ENCODE measurements at regions of chr10 and their contacts with region 1.

Region 1: DNA sequence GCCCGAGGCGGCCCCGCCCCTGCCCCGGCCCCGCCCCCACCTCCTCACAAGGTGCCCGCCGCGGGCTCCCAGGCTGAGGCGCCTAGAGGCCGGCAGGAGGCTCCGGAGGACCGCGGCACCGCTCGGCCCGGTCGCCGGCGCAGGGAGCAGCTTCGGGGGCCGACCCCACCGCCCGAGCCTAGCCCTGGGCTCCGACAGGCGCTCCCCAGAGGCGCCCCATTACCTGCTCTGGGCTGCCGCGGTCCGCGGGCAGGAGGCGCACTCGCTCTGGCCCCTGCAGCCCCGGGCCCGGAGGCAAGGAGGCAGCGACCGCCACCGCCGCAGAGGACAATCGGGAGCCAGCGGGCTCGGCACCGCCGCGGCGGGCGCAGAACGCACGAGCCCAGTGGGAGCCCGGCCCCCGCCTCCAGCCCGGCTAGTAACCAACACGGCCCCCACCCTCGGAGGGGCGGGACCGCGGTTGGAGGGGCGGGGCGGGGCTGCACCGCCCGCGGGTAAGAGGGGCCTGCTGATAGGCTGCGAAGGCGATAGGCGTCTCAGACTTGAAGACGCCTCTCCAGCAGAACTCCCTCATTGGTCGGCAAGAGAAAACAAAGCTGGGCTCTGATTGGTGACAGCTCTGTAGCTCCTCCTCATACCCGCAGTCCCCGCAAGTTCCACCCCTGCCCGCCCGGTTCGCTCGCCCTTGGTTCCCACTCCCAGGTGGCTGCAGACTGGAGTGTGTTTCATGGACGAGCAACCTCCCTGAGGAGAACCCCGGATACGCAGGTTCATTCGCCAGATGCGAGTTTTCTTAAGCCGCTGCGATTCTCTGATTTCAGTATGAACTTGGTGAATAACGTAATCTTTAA is at the start of gene MPP7:
- DNase-seq: peak; percentile 94 to 98 (median 96)
- ATAC-seq: peak; percentile 89
- H3K4me3 ChIP-seq: peak within 1 kb of the TSS; percentile 67 to 87
- H3K4me3 Mint-ChIP-seq: peak within 1 kb of the TSS; percentile 97
- H3K27ac ChIP-seq: peak within 1 kb of the TSS; percentile 52 to 71
- H3K27ac Mint-ChIP-seq: peak within 1 kb of the TSS; percentile 95
- H3K4me1 ChIP-seq: peaks cover 44% of the 10 kb centered on the region
- H3K4me1 Mint-ChIP-seq: peaks cover 65% of the 10 kb centered on the region
- H3K27me3 ChIP-seq: no peaks in the 10 kb centered on the region
- H3K27me3 Mint-ChIP-seq: no peaks in the 10 kb centered on the region
- CTCF ChIP-seq: peak; percentile 61
- total RNA-seq, gene MPP7: 22.5 to 23.1 TPM

Region 2: GRCh38 chr10:27155066-27155754 is 1147.7 kb before region 1 on chr10 and contains the start of gene MASTL:
- CTCF ChIA-PET with region 1: no interaction called
- POLR2A ChIA-PET with region 1: no interaction called
- intact Hi-C with region 1: loop called in 1 of 2 experiments (anchors 10 kb)
- DNase-seq: peak; percentile 90 to 98 (median 93)
- ATAC-seq: peak; percentile 82
- H3K4me3 ChIP-seq: peak within 1 kb of the TSS; percentile 84 to 98
- H3K4me3 Mint-ChIP-seq: peak within 1 kb of the TSS; percentile 99
- H3K27ac ChIP-seq: peak within 1 kb of the TSS; percentile 100
- H3K27ac Mint-ChIP-seq: peak within 1 kb of the TSS; percentile 100
- H3K4me1 ChIP-seq: peaks cover 27% of the 10 kb centered on the region
- H3K4me1 Mint-ChIP-seq: peaks cover 49% of the 10 kb centered on the region
- H3K27me3 ChIP-seq: no peaks in the 10 kb centered on the region
- H3K27me3 Mint-ChIP-seq: no peaks in the 10 kb centered on the region
- CTCF ChIP-seq: no peak
- total RNA-seq, gene MASTL: 33.4 to 33.6 TPM

Region 3: GRCh38 chr10:27742195-27743011 is 560.5 kb before region 1 on chr10:
- CTCF ChIA-PET with region 1: no interaction called
- POLR2A ChIA-PET with region 1: interaction called, 3 read pairs
- intact Hi-C with region 1: loop called (anchors 5 kb)
- DNase-seq: peak; percentile 55 to 85 (median 78)
- ATAC-seq: peak; percentile 82
- H3K4me3 ChIP-seq: peak overlapping the region; percentile 42 to 80
- H3K4me3 Mint-ChIP-seq: peak overlapping the region; percentile 87
- H3K27ac ChIP-seq: no peak overlapping the region
- H3K27ac Mint-ChIP-seq: no peak overlapping the region
- H3K4me1 ChIP-seq: peaks cover 57% of the 10 kb centered on the region
- H3K4me1 Mint-ChIP-seq: peaks cover 43% of the 10 kb centered on the region
- H3K27me3 ChIP-seq: peaks cover 53 to 65% of the 10 kb centered on the region in 2 experiments
- H3K27me3 Mint-ChIP-seq: peaks cover 57% of the 10 kb centered on the region
- CTCF ChIP-seq: peak; percentile 78

Region 4: GRCh38 chr10:27908283-27908682 is 394.6 kb before region 1 on chr10:
- CTCF ChIA-PET with region 1: no interaction called
- POLR2A ChIA-PET with region 1: no interaction called
- intact Hi-C with region 1: no loop called
- DNase-seq: no peak
- ATAC-seq: no peak
- H3K4me3 ChIP-seq: no peak overlapping the region
- H3K4me3 Mint-ChIP-seq: no peak overlapping the region
- H3K27ac ChIP-seq: no peak overlapping the region
- H3K27ac Mint-ChIP-seq: no peak overlapping the region
- H3K4me1 ChIP-seq: no peaks in the 10 kb centered on the region
- H3K4me1 Mint-ChIP-seq: no peaks in the 10 kb centered on the region
- H3K27me3 ChIP-seq: peaks cover 0 to 2% of the 10 kb centered on the region in 2 experiments
- H3K27me3 Mint-ChIP-seq: peaks cover 3% of the 10 kb centered on the region
- CTCF ChIP-seq: no peak

Region 5: GRCh38 chr10:28036587-28036986 is 266.3 kb before region 1 on chr10:
- CTCF ChIA-PET with region 1: no interaction called
- POLR2A ChIA-PET with region 1: no interaction called
- intact Hi-C with region 1: no loop called
- DNase-seq: no peak
- ATAC-seq: no peak
- H3K4me3 ChIP-seq: no peak overlapping the region
- H3K4me3 Mint-ChIP-seq: no peak overlapping the region
- H3K27ac ChIP-seq: no peak overlapping the region
- H3K27ac Mint-ChIP-seq: no peak overlapping the region
- H3K4me1 ChIP-seq: no peaks in the 10 kb centered on the region
- H3K4me1 Mint-ChIP-seq: no peaks in the 10 kb centered on the region
- H3K27me3 ChIP-seq: peaks cover 2 to 4% of the 10 kb centered on the region in 2 experiments
- H3K27me3 Mint-ChIP-seq: peaks cover 15% of the 10 kb centered on the region
- CTCF ChIP-seq: no peak

Region 6: GRCh38 chr10:28241741-28242399 is 61.0 kb before region 1 on chr10:
- CTCF ChIA-PET with region 1: interaction called, 7 read pairs
- POLR2A ChIA-PET with region 1: interaction called, 5 read pairs
- intact Hi-C with region 1: loop called in 1 of 2 experiments (anchors 1 kb)
- DNase-seq: peak in 7 of 9 experiments; percentile 12 to 69 (median 23)
- ATAC-seq: peak; percentile 84
- H3K4me3 ChIP-seq: no peak overlapping the region
- H3K4me3 Mint-ChIP-seq: no peak overlapping the region
- H3K27ac ChIP-seq: no peak overlapping the region
- H3K27ac Mint-ChIP-seq: no peak overlapping the region
- H3K4me1 ChIP-seq: peaks cover 15% of the 10 kb centered on the region
- H3K4me1 Mint-ChIP-seq: peaks cover 38% of the 10 kb centered on the region
- H3K27me3 ChIP-seq: no peaks in the 10 kb centered on the region
- H3K27me3 Mint-ChIP-seq: no peaks in the 10 kb centered on the region
- CTCF ChIP-seq: peak; percentile 91

Region 7: DNA sequence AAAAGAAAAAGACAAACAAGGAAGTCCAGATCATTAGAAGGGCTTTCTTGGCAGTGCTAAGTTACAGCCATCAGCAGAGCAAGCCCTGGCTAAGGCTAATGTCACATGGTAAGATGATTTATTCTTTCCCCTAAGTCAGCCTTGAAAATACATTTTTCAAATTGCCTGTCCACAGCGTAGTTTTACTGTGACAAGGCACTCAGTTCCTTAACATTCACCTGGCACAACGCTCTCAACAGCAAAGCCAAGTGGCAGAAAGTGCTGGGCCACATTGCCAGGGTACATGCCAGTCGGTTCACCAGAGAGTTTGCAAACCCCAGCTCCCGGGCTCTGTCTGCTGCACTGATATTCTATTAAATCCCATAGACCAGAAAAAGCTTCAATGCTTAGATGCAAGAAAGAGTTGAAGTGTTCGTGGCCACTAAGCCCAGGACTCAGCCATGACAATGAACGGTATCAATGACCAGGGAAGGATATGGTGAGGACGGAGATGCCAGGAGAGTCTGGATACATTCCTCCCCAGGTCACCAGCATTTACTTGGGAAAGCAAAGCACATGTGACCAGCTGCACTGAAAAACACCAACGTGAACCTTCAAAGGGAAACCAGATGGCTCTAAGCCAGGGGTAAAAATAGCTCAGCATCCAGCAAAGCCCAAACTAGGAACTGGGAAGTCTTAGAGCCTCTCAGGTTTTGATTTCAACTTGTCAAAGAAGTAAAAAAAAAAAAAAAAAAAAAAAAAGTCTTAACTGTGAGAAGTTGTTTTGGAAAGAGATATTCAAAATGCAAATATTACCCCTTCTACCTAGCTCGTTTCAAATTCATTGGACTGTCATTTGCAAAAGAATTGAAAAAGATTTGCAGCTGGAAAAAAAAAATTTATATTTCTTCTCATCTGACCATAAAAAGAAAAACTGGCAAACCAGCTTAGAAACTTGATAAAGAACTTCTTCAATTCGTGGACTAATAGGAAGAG is 23.9 kb after region 1 on chr10:
- CTCF ChIA-PET with region 1: interaction called, 36 read pairs
- POLR2A ChIA-PET with region 1: interaction called, 25 read pairs
- intact Hi-C with region 1: no loop called
- DNase-seq: no peak
- ATAC-seq: no peak
- H3K4me3 ChIP-seq: peak overlapping the region in 1 of 2 experiments; percentile 3
- H3K4me3 Mint-ChIP-seq: peak overlapping the region; percentile 44
- H3K27ac ChIP-seq: no peak overlapping the region
- H3K27ac Mint-ChIP-seq: peak overlapping the region; percentile 66
- H3K4me1 ChIP-seq: peaks cover 44% of the 10 kb centered on the region
- H3K4me1 Mint-ChIP-seq: peaks cover 66% of the 10 kb centered on the region
- H3K27me3 ChIP-seq: no peaks in the 10 kb centered on the region
- H3K27me3 Mint-ChIP-seq: no peaks in the 10 kb centered on the region
- CTCF ChIP-seq: no peak

Region 8: GRCh38 chr10:28367929-28368484 is 65.1 kb after region 1 on chr10:
- CTCF ChIA-PET with region 1: interaction called, 29 read pairs
- POLR2A ChIA-PET with region 1: interaction called, 31 read pairs
- intact Hi-C with region 1: loop called (anchors 1 to 2 kb)
- DNase-seq: peak; percentile 14 to 91 (median 68)
- ATAC-seq: peak; percentile 92
- H3K4me3 ChIP-seq: peak overlapping the region in 1 of 2 experiments; percentile 1
- H3K4me3 Mint-ChIP-seq: peak overlapping the region; percentile 74
- H3K27ac ChIP-seq: peak overlapping the region; percentile 51 to 77
- H3K27ac Mint-ChIP-seq: peak overlapping the region; percentile 96
- H3K4me1 ChIP-seq: peaks cover 52% of the 10 kb centered on the region
- H3K4me1 Mint-ChIP-seq: peaks cover 52% of the 10 kb centered on the region
- H3K27me3 ChIP-seq: no peaks in the 10 kb centered on the region
- H3K27me3 Mint-ChIP-seq: no peaks in the 10 kb centered on the region
- CTCF ChIP-seq: no peak

Region 9: GRCh38 chr10:28532383-28533175 is 229.7 kb after region 1 on chr10 and contains the start of gene WAC:
- CTCF ChIA-PET with region 1: no interaction called
- POLR2A ChIA-PET with region 1: no interaction called
- intact Hi-C with region 1: loop called in 1 of 2 experiments (anchors 1 kb)
- DNase-seq: peak; percentile 94 to 99 (median 97)
- ATAC-seq: peak; percentile 79
- H3K4me3 ChIP-seq: peak within 1 kb of the TSS; percentile 74 to 99
- H3K4me3 Mint-ChIP-seq: peak within 1 kb of the TSS; percentile 99
- H3K27ac ChIP-seq: peak within 1 kb of the TSS; percentile 95 to 99
- H3K27ac Mint-ChIP-seq: peak within 1 kb of the TSS; percentile 100
- H3K4me1 ChIP-seq: peaks cover 47% of the 10 kb centered on the region
- H3K4me1 Mint-ChIP-seq: peaks cover 69% of the 10 kb centered on the region
- H3K27me3 ChIP-seq: no peaks in the 10 kb centered on the region
- H3K27me3 Mint-ChIP-seq: no peaks in the 10 kb centered on the region
- CTCF ChIP-seq: no peak
- total RNA-seq, gene WAC: 195 to 200 TPM

Region 10: DNA sequence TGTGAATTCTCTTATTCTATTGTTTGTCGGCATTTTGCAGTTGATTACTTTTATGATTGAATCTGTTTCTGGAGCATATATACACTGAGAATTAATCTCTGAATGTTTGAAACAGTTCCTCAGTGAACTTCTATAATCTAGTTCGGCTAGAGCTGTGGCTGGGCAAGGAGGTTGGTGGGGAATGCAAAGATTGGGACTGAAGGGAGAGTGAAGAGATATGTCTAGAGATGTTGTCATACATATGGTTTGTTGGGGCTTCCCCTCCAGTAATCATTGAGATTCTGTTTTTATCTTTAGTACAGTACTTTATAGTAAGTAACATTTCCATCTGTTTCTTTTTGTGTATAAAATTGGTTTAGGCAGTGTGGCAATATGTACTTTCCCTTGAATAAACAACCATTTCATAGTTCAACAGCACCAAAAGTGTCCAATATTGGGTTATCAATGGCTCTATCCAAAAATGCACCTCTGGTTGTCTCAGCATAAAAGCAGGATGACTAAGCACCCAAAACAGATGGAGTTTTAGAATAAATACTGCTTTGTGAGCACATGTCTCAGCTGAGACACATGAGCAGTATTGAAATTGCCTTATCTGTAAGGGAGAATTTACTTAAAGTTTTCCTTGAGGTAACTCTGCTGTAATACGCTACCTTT is 266.8 kb after region 1 on chr10:
- CTCF ChIA-PET with region 1: no interaction called
- POLR2A ChIA-PET with region 1: no interaction called
- intact Hi-C with region 1: no loop called
- DNase-seq: no peak
- ATAC-seq: no peak
- H3K4me3 ChIP-seq: no peak overlapping the region
- H3K4me3 Mint-ChIP-seq: peak overlapping the region; percentile 6
- H3K27ac ChIP-seq: no peak overlapping the region
- H3K27ac Mint-ChIP-seq: peak overlapping the region; percentile 29
- H3K4me1 ChIP-seq: peaks cover 64% of the 10 kb centered on the region
- H3K4me1 Mint-ChIP-seq: peaks cover 87% of the 10 kb centered on the region
- H3K27me3 ChIP-seq: no peaks in the 10 kb centered on the region
- H3K27me3 Mint-ChIP-seq: no peaks in the 10 kb centered on the region
- CTCF ChIP-seq: no peak

Region 11: DNA sequence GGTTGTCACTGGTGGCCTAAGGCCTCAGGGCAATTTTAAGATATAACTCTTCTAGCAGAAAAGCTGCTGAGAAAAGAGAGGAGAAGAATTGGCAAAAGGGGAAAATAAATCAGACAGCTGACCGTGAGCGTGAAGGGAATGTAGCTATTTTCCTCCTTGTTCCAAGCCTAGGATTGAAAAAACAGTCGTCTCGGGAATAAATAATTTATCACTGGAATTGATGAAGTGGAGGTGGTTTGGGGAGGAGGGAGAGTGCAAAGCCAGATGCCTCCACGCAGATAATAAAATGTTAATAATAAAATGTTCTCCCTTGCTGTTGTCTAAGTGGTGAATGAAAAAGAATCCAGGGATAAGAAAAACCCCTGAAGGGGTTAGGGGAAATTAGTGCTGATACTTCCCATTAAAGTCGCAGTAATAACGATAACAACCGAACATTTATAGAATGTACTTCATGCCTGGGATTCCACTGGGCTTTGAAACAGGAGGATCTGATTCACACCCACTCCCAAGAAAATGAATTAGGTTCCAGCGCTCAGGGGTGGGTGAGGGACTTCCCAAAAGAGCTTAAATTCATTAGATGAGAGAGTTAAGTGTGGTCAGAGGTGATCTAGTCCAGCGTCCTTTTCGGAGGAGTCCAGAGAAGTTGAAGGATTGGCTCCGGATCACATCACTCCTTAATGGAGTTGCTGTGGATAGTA is 401.8 kb after region 1 on chr10:
- CTCF ChIA-PET with region 1: no interaction called
- POLR2A ChIA-PET with region 1: no interaction called
- intact Hi-C with region 1: no loop called
- DNase-seq: no peak
- ATAC-seq: no peak
- H3K4me3 ChIP-seq: no peak overlapping the region
- H3K4me3 Mint-ChIP-seq: no peak overlapping the region
- H3K27ac ChIP-seq: no peak overlapping the region
- H3K27ac Mint-ChIP-seq: no peak overlapping the region
- H3K4me1 ChIP-seq: no peaks in the 10 kb centered on the region
- H3K4me1 Mint-ChIP-seq: no peaks in the 10 kb centered on the region
- H3K27me3 ChIP-seq: no peaks in the 10 kb centered on the region
- H3K27me3 Mint-ChIP-seq: peaks cover 20% of the 10 kb centered on the region
- CTCF ChIP-seq: no peak